ENCODE measurements at regions of chr13 and their contacts with region 1.

Region 1: GRCh38 chr13:101785858-101786257 is 333.4 kb downstream of the ITGBL1 start:
- DNase-seq: peak; percentile 33 to 47
- H3K4me3 ChIP-seq: no peak overlapping the region
- H3K27ac ChIP-seq: no peak overlapping the region
- H3K4me1 ChIP-seq: no peaks in the 10 kb centered on the region; a peak in 1 of 7 replicates
- H3K27me3 ChIP-seq: no peaks in the 10 kb centered on the region
- CTCF ChIP-seq: peak; percentile 55 to 94 (median 85)
- EP300 ChIP-seq: no peak
- POLR2A ChIP-seq: no peak
- RAD21 ChIP-seq: peak; percentile 92 to 95

Region 2: DNA sequence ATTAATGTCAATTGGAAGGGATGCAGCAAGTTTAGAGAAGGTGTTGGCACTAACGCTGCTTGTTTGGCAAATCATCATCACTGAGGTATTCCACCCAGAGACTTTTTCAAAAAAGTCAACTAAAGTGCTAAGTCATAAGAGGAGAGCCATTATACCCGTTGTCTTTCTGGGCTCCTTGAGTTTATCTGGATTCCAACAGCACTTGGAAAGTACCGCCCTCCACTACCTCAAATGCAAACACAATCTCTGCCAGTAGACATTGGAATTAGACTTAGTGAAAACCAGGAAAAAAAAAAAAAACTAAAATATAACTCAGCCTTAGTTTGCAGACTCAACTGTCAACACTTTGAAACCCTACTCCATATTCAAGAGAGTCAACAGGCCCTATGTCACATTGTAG is 67.4 kb before region 1 on chr13:
- CTCF ChIA-PET with region 1: no interaction called
- POLR2A ChIA-PET with region 1: no interaction called
- DNase-seq: no peak
- H3K4me3 ChIP-seq: no peak overlapping the region
- H3K27ac ChIP-seq: no peak overlapping the region
- H3K4me1 ChIP-seq: no peaks in the 10 kb centered on the region
- H3K27me3 ChIP-seq: no peaks in the 10 kb centered on the region
- CTCF ChIP-seq: no peak
- EP300 ChIP-seq: no peak
- POLR2A ChIP-seq: no peak
- RAD21 ChIP-seq: no peak

Region 3: DNA sequence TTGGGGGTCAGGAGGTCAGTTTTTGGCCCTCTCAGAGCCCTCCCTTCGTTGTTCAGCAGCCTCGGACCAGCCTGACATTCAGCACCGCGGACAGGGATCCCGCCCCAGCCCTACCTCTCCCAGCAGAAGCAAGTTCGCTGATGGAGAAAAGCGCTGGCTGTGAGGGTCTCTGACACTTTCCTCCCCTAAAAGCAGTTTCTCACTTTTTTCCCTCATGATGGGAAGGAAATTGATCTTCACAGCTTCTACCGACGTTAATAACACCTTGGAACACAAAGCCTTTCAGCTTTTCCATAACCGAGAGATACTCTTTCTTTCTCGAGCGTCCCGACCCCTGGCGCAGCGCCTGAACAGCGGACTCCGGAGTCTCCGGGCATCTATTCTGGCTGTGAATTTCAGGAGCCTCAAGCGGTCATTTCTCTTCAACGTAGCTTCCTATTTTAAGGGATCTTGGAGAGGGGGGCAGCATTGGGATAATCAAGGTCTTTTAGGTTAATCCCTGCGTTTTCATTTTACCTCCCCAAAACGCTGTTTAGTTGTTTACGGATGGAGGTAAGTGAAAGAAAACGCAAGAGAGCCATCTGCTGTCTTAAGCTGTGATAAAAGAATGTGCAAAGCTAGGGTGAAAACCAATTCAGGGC is 133.8 kb after region 1 on chr13:
- CTCF ChIA-PET with region 1: interaction called, 44 read pairs
- POLR2A ChIA-PET with region 1: no interaction called
- DNase-seq: peak in 1 of 2 experiments; percentile 85
- H3K4me3 ChIP-seq: peak overlapping the region; percentile 2 to 59 (median 28); a peak in 7 of 8 replicates
- H3K27ac ChIP-seq: no peak overlapping the region
- H3K4me1 ChIP-seq: peaks cover 3 to 7% (median 3%) of the 10 kb centered on the region in 4 experiments
- H3K27me3 ChIP-seq: peaks cover 26 to 56% (median 43%) of the 10 kb centered on the region in 4 experiments
- CTCF ChIP-seq: no peak; a peak in 1 of 4 replicates
- EP300 ChIP-seq: no peak
- POLR2A ChIP-seq: no peak
- RAD21 ChIP-seq: peak; percentile 40 to 49; a peak in 2 of 4 replicates

Region 4: GRCh38 chr13:101925731-101926130 is 139.9 kb after region 1 on chr13:
- CTCF ChIA-PET with region 1: interaction called, 44 read pairs
- POLR2A ChIA-PET with region 1: no interaction called
- DNase-seq: no peak
- H3K4me3 ChIP-seq: no peak overlapping the region
- H3K27ac ChIP-seq: no peak overlapping the region
- H3K4me1 ChIP-seq: no peaks in the 10 kb centered on the region
- H3K27me3 ChIP-seq: no peaks in the 10 kb centered on the region
- CTCF ChIP-seq: no peak
- EP300 ChIP-seq: no peak
- POLR2A ChIP-seq: no peak
- RAD21 ChIP-seq: no peak

Measured in H1 (cell line).